Heart left ventricle (tissue), 16 donors: ENCODE measurements at regions of chr10 and their contacts with region 1.

Region 1: DNA sequence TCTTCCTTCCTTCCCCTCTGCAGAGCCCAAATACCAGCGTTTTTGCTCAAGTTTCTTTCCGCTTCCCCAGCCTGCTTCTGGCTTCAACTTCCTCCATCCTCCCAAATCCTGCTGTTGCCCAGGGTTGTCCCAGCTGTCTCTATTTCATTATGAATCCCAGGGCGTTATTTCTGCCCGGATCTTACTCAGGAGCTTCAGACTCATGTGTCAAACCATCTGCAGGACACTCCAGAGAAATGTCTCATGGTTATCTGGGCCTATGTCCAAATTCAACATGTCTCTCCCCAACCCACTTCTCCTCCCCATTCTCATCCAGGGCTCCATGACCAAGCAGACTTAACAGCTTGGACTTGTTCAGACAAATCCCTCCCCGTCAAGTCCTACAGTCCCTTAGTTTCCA is 15.6 kb downstream of the ARHGAP22 start:
- DNase-seq: peak in 2 of 5 donors; percentile 42
- ATAC-seq: peak; percentile 65 to 92 (median 78)
- H3K4me3 ChIP-seq: no peak overlapping the region
- H3K27ac ChIP-seq: peak overlapping the region in 10 of 12 donors; percentile 10 to 78 (median 54)
- H3K4me1 ChIP-seq: peaks cover 0 to 36% (median 9%) of the 10 kb centered on the region in 12 donors
- H3K27me3 ChIP-seq: peaks cover 0 to 2% (median 0%) of the 10 kb centered on the region in 9 donors
- CTCF ChIP-seq: no peak
- POLR2A ChIP-seq: no peak

Region 2: DNA sequence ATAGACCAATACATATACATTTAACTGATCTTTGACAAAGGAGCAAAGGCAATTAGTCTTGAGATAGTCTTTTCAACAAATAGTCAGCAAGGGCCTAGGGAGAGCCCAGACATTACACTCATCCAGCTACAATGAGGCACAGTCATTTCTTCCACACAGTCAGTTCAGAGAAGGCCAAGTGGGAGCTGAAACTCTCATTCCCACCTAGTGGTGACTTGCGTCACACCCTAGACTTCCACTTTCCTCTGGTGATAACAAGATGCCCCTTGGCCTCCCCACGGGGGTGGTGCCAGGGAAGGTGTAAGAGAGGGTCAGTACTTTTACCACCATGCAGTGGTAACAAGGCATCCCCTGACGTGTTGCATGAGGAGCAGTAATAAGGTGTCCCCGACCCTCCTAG is 322.7 kb before region 1 on chr10:
- intact Hi-C with region 1: loop called in 1 of 10 experiments (anchors 2 kb)
- DNase-seq: no peak
- ATAC-seq: no peak
- H3K4me3 ChIP-seq: no peak overlapping the region
- H3K27ac ChIP-seq: no peak overlapping the region
- H3K4me1 ChIP-seq: no peaks in the 10 kb centered on the region
- H3K27me3 ChIP-seq: no peaks in the 10 kb centered on the region
- CTCF ChIP-seq: no peak
- POLR2A ChIP-seq: no peak